B cell (primary cell): ENCODE measurements at regions of chr13 and their contacts with region 1.

Region 1: DNA sequence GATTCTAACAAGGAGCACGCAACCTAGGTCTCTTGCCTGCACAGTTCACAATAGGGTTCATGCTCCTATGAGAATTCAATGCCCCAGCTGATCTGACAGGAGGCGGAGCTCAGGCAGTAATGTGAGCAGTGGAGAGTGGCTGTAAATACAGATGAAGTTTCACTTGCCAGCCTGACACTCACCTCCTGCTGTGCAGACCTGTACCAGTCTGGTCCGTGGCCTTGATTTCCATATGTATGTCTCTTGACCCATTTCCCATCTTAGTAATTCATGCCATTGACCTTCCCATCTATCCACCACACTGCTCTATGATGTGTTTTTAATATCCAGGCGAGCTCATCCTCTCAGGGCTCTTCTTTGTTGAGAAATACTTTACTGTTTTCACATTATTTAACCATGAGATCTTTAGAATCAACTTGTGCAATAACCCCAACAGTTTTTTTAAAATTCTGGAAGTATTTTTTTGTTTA is 95.2 kb downstream of the LRCH1 start:
- DNase-seq: peak; percentile 56
- ATAC-seq: peak; percentile 83
- H3K4me3 ChIP-seq: no peak overlapping the region
- H3K4me3 Mint-ChIP-seq: peak overlapping the region; percentile 35
- H3K27ac ChIP-seq: no peak overlapping the region
- H3K27ac Mint-ChIP-seq: peak overlapping the region; percentile 51
- H3K4me1 ChIP-seq: peaks cover 20 to 36% of the 10 kb centered on the region in 2 donors
- H3K4me1 Mint-ChIP-seq: peaks cover 69% of the 10 kb centered on the region
- H3K27me3 ChIP-seq: no peaks in the 10 kb centered on the region
- H3K27me3 Mint-ChIP-seq: no peaks in the 10 kb centered on the region
- CTCF ChIP-seq: no peak

Region 2: DNA sequence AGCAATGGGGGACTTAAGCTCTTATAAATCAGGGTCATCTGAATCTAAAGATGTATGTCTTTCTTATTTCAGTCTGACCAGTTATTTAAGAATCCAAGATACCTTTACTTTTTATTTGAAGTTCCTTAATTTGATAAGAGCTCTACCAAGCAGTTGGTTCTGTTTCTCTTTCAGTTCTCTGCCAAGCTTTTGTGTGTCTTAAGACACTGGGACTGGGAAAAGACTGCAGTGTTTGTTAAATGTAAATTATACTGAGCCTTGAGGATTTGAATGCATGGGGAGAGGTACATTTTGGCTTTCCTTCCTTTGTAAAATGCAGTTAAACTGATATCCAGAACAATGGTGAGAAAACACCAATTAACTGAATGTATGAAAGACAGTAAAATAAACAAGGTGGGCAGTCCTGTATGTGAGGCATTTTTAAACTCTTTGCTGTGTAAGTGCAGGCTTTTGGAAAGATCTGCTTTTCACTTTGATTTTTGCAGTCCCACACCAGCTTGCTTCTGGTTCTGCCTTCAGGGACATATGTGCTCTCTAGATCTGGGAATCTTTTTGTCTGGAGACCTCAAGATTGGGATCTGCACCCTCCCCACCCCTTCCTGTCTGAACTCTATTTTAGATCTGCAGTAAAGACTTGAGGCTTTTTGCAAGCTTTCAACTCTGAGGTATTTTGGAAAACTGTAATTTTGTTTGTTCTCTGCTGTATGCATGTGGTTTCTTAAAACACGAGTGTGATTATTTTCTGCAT is 17.6 kb before region 1 on chr13:
- CTCF ChIA-PET with region 1: interaction called, 3 read pairs
- POLR2A ChIA-PET with region 1: interaction called, 5 read pairs
- intact Hi-C with region 1: loop called (anchors 2 kb)
- DNase-seq: peak; percentile 33
- ATAC-seq: peak; percentile 24
- H3K4me3 ChIP-seq: no peak overlapping the region
- H3K4me3 Mint-ChIP-seq: peak overlapping the region; percentile 47
- H3K27ac ChIP-seq: peak overlapping the region in 1 of 2 donors; percentile 68
- H3K27ac Mint-ChIP-seq: peak overlapping the region; percentile 48
- H3K4me1 ChIP-seq: peaks cover 27 to 35% of the 10 kb centered on the region in 2 donors
- H3K4me1 Mint-ChIP-seq: peaks cover 73% of the 10 kb centered on the region
- H3K27me3 ChIP-seq: no peaks in the 10 kb centered on the region
- H3K27me3 Mint-ChIP-seq: no peaks in the 10 kb centered on the region
- CTCF ChIP-seq: no peak

Region 3: DNA sequence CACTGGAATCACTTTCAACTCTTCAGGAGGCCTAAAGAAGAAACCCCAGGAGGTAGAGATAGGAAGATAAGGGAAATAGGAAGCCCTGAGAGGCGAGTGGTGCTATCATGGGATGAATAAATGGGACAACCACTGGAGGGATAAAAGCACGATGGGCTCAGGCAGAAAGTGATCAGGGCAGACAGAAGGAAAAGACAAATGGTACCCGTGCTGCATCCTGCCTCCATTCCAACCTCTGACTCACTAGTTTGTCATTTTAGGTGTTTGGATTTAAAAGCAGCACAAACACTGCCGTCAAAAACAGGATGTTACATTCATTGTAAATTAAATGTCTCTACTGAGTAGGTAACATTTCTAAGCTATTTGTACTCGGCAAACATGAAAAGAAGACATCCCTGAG is 562.9 kb after region 1 on chr13:
- CTCF ChIA-PET with region 1: no interaction called
- POLR2A ChIA-PET with region 1: no interaction called
- intact Hi-C with region 1: no loop called
- DNase-seq: no peak
- ATAC-seq: no peak
- H3K4me3 ChIP-seq: no peak overlapping the region
- H3K4me3 Mint-ChIP-seq: no peak overlapping the region
- H3K27ac ChIP-seq: no peak overlapping the region
- H3K27ac Mint-ChIP-seq: no peak overlapping the region
- H3K4me1 ChIP-seq: no peaks in the 10 kb centered on the region
- H3K4me1 Mint-ChIP-seq: no peaks in the 10 kb centered on the region
- H3K27me3 ChIP-seq: no peaks in the 10 kb centered on the region
- H3K27me3 Mint-ChIP-seq: peaks cover 7% of the 10 kb centered on the region
- CTCF ChIP-seq: no peak

Region 4: DNA sequence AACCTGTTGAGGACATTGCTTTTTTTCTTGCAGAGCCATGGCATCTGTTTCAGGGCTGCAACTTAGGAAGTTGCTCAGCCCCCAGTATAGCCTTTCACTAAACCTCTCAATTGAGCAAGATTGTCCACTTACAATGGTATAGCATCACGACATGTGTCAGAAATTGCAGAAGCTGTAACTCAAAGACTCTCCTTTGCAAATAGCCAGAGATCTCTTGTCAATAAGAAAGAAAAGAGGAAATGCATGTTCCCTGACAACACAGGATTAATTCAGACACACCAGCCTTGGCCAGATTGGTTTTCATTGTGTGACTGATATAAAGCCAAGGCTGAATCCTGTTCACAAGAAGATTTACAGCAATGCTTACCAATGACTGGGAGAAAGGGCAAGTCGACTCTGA is 1966.8 kb after region 1 on chr13:
- CTCF ChIA-PET with region 1: no interaction called
- POLR2A ChIA-PET with region 1: no interaction called
- intact Hi-C with region 1: no loop called
- DNase-seq: no peak
- ATAC-seq: no peak
- H3K4me3 ChIP-seq: no peak overlapping the region
- H3K4me3 Mint-ChIP-seq: no peak overlapping the region
- H3K27ac ChIP-seq: no peak overlapping the region
- H3K27ac Mint-ChIP-seq: no peak overlapping the region
- H3K4me1 ChIP-seq: no peaks in the 10 kb centered on the region
- H3K4me1 Mint-ChIP-seq: no peaks in the 10 kb centered on the region
- H3K27me3 ChIP-seq: peaks cover 0 to 5% (median 4%) of the 10 kb centered on the region in 4 experiments
- H3K27me3 Mint-ChIP-seq: peaks cover 12% of the 10 kb centered on the region
- CTCF ChIP-seq: no peak